Caco-2 (cell line): ENCODE measurements at regions of chr11 and their contacts with region 1.

Region 1: GRCh38 chr11:17544181-17544622 is at the start of gene USH1C:
- DNase-seq: peak; percentile 83 to 91
- H3K4me3 ChIP-seq: peak within 1 kb of the TSS; percentile 84
- H3K4me3 Mint-ChIP-seq: peak within 1 kb of the TSS; percentile 72
- H3K27ac Mint-ChIP-seq: peak within 1 kb of the TSS; percentile 80
- H3K4me1 ChIP-seq: peaks cover 46% of the 10 kb centered on the region
- H3K4me1 Mint-ChIP-seq: peaks cover 57% of the 10 kb centered on the region
- H3K27me3 ChIP-seq: no peaks in the 10 kb centered on the region
- H3K27me3 Mint-ChIP-seq: no peaks in the 10 kb centered on the region
- CTCF ChIP-seq: no peak
- total RNA-seq, gene USH1C: 101 and 113 TPM in 2 replicates

Region 2: GRCh38 chr11:17528181-17528691 is 16.0 kb before region 1 on chr11:
- CTCF ChIA-PET with region 1: interaction called, 17 read pairs
- POLR2A ChIA-PET with region 1: interaction called, 10 read pairs
- intact Hi-C with region 1: loop called (anchors 1 kb)
- DNase-seq: peak in 1 of 2 experiments; percentile 69
- H3K4me3 ChIP-seq: no peak overlapping the region
- H3K4me3 Mint-ChIP-seq: no peak overlapping the region
- H3K27ac Mint-ChIP-seq: peak overlapping the region; percentile 39
- H3K4me1 ChIP-seq: peaks cover 33% of the 10 kb centered on the region
- H3K4me1 Mint-ChIP-seq: peaks cover 17% of the 10 kb centered on the region
- H3K27me3 ChIP-seq: no peaks in the 10 kb centered on the region
- H3K27me3 Mint-ChIP-seq: no peaks in the 10 kb centered on the region
- CTCF ChIP-seq: peak; percentile 55 to 78

Region 3: DNA sequence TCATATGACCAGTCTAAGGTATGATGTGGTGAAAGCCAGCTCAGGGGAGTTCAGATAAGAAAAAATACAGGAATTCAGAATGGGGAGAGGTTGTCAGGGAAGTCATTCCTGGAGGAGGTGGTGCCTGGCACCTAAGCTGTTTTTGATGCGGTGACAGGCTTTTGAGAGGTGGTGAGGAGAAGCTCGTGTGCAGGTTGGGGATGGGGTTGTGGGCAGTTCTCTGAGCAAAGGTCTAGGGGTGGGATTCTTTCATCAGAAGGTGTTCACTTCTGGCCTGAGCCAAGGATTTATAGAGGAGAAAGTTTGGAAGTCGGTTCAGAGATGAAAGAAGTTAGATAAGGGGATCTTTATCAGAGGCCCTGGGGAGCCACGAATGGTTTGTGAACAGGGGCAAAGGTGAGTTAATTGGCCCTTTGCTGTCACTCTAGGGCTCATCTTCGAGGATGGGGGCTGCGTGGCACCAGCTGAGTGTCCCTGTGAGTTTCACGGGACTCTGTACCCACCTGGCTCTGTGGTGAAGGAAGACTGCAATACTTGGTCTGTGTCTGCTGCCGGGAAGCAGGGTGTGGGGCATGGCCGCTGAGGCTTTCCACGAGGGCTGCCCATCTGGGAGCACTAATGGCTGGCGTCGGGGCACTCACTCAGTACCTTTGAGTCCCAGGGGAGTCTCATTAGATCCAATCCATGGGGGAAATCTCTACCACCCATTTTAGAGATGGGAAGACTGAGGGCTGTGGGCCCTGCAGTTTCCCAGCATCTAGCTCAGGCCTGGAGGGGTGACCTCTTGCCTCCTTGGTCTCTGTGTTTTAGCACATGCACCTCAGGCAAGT is 16.3 kb after region 1 on chr11:
- CTCF ChIA-PET with region 1: interaction called, 4 read pairs
- POLR2A ChIA-PET with region 1: interaction called, 8 read pairs
- intact Hi-C with region 1: loop called (anchors 1 kb)
- DNase-seq: peak; percentile 76 to 92
- H3K4me3 ChIP-seq: no peak overlapping the region
- H3K4me3 Mint-ChIP-seq: peak overlapping the region; percentile 19
- H3K27ac Mint-ChIP-seq: peak overlapping the region; percentile 60
- H3K4me1 ChIP-seq: peaks cover 56% of the 10 kb centered on the region
- H3K4me1 Mint-ChIP-seq: peaks cover 27% of the 10 kb centered on the region
- H3K27me3 ChIP-seq: no peaks in the 10 kb centered on the region
- H3K27me3 Mint-ChIP-seq: no peaks in the 10 kb centered on the region
- CTCF ChIP-seq: no peak